ENCODE measurements at regions of chrX and their contacts with region 1.

Region 1: GRCh38 chrX:74015379-74016019 is 288.5 kb upstream of the ZCCHC13 start:
- DNase-seq: peak in 6 of 10 donors; percentile 12 to 92 (median 44)

Region 2: GRCh38 chrX:73214426-73215094 is 800.9 kb before region 1 on chrX and contains the start of gene NAP1L2:
- intact Hi-C with region 1: no loop called
- DNase-seq: peak; percentile 18 to 93 (median 52)

Region 3: DNA sequence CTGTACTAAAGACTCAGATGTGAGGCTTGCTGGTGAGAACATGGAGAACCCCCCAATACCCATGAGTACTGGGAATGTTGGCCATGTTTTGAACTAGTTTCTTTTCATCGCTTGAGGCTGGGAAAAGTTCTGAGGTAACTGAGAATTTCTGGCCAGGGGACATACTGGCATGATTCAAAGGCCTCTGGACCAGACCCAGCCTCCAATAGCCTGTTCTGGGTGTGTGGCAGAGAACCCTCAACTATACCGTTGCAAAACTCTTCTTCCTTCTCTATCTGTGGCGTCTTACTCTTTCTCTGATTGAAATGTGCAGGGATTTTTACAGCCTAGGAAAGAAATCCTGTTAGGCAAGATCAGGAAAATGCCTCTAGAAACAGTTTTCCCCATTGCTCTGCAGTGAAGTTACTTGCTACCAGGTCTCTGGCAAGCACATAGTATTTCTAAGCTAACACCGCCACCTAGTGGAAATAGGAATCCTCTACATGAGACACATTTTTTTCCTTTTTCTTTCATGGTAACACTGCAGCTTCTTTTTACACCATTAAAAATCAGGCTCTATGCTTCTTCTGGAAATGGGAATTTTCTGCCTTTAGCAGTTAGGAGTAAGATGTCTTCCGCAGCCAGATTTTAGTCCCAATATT is 117.8 kb after region 1 on chrX:
- intact Hi-C with region 1: loop called (anchors 5 kb)
- DNase-seq: no peak

Measured in posterior cingulate gyrus (tissue), 11 donors.